Activated naive CD4-positive, alpha-beta T cell treated with anti-CD3 and anti-CD28 coated beads for 36 hours (primary cell): ENCODE measurements at regions of chr16 and their contacts with region 1.

Region 1: DNA sequence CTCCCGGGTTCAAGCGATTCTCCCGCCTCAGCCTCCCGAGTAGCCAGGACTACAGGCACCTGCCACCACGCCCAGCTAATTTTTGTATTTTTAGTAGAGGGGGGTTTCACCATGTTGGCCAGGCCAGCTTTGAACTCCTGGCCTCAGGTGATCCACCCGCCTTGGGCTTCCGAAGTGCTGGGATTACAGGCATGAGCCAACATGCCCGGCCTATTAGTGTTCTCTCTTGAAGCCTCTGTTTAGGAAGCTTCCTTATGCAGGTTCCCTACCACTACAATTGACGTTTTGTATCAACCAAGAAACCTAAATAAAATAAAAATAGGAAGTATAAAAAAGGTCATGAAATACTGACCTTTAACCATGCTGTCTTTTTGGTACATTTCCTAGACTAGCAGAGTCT is 16.0 kb downstream of the CHST5 start:
- DNase-seq: no peak
- H3K4me3 Mint-ChIP-seq: no peak overlapping the region
- H3K27ac Mint-ChIP-seq: no peak overlapping the region
- H3K4me1 Mint-ChIP-seq: peaks cover 7% of the 10 kb centered on the region
- H3K27me3 Mint-ChIP-seq: no peaks in the 10 kb centered on the region

Region 2: GRCh38 chr16:75402821-75403475 is 116.9 kb before region 1 on chr16:
- CTCF ChIA-PET with region 1: no interaction called
- intact Hi-C with region 1: loop called (anchors 5 kb)
- DNase-seq: no peak
- H3K4me3 Mint-ChIP-seq: no peak overlapping the region
- H3K27ac Mint-ChIP-seq: no peak overlapping the region
- H3K4me1 Mint-ChIP-seq: peaks cover 27% of the 10 kb centered on the region
- H3K27me3 Mint-ChIP-seq: no peaks in the 10 kb centered on the region

Region 3: DNA sequence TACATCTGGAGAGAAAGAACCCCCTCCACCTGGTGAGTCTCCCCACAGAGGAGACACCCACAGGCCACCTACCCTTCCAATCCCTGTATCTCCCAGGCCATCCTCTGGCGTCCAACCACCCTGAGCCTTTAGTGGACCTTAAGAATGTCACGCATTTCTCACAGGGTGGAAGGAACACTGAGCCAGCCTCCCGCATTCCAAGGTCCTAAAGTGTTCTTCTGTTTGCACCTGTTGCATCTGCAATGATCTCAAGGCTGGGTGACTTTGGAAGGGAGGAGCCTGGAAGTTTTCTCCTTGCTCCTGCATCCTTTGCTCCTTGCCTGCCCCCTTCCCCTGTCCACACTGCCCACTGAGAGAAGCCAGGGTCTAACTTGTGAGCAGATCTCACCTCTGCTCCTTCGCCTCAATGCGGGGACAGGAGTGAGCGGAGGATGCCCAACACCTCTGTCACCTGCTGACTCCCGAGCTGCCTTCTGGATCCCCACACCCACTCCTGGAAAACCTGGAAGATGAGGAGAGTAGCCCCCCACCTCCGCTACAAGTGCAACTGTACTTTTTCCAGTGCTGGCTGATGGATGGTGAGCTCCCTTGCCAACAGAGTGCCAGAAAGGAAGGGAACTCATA is 12.4 kb after region 1 on chr16:
- CTCF ChIA-PET with region 1: interaction called, 13 read pairs
- intact Hi-C with region 1: no loop called
- DNase-seq: no peak
- H3K4me3 Mint-ChIP-seq: no peak overlapping the region
- H3K27ac Mint-ChIP-seq: no peak overlapping the region
- H3K4me1 Mint-ChIP-seq: no peaks in the 10 kb centered on the region
- H3K27me3 Mint-ChIP-seq: no peaks in the 10 kb centered on the region

Region 4: DNA sequence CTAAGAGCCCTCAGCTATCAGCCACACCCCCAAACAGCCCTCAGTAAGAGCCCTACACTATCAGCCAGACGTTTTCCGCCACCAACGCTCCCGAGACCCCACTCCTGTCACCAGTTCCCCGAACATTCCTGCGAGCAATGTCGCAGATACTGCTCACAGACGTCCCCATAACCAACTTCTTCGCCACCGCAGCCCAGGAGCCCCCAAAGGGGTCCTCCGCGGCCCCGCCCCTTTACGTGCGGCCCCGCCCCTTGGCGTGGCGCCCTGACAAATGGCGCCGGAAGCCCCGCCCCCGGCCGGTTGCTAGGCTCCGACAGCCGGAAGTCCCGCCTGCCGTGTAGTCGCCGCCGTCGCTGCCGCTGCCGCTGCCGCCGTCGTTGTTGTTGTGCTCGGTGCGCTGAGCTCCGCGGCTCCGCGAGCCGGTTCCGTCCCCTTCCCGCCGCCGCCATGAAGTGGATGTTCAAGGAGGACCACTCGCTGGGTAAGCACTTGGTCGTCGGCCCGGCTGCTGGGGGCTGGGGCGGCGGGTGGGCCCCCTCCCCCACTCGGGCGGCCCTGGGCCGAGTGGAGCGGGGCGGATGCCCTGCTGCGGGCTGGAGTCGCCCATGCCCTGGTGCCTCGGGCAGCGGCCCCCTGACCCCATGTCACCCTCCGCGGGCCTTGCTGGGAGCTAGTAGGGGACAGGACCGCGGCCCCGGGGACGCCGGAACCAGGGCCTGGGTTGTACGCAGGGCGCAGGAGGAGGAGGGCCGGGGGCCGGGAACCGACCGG is 46.3 kb after region 1 on chr16 and contains the start of gene GABARAPL2:
- CTCF ChIA-PET with region 1: interaction called, 6 read pairs
- intact Hi-C with region 1: loop called (anchors 1 kb)
- DNase-seq: peak; percentile 89
- H3K4me3 Mint-ChIP-seq: peak within 1 kb of the TSS; percentile 98
- H3K27ac Mint-ChIP-seq: peak within 1 kb of the TSS; percentile 94
- H3K4me1 Mint-ChIP-seq: peaks cover 38% of the 10 kb centered on the region
- H3K27me3 Mint-ChIP-seq: peaks cover 3% of the 10 kb centered on the region
- total RNA-seq, gene GABARAPL2: 63.3 to 66.8 TPM

Region 5: GRCh38 chr16:75647492-75648264 is 127.8 kb after region 1 on chr16 and contains the starts of genes KARS1 and TERF2IP:
- CTCF ChIA-PET with region 1: interaction called, 7 read pairs
- intact Hi-C with region 1: loop called (anchors 1 kb)
- DNase-seq: peak; percentile 96
- H3K4me3 Mint-ChIP-seq: peak within 1 kb of the TSS; percentile 96
- H3K27ac Mint-ChIP-seq: peak within 1 kb of the TSS; percentile 98
- H3K4me1 Mint-ChIP-seq: peaks cover 62% of the 10 kb centered on the region
- H3K27me3 Mint-ChIP-seq: no peaks in the 10 kb centered on the region
- total RNA-seq, gene KARS1: 371 to 385 TPM
- total RNA-seq, gene TERF2IP: 78.6 to 79.0 TPM